GM13976 (cell line): ENCODE measurements at regions of chrX and their contacts with region 1.

Region 1: GRCh38 chrX:109714340-109714958 is 18.6 kb downstream of the ACSL4 start:
- DNase-seq: no peak
- CTCF ChIP-seq: no peak

Region 2: DNA sequence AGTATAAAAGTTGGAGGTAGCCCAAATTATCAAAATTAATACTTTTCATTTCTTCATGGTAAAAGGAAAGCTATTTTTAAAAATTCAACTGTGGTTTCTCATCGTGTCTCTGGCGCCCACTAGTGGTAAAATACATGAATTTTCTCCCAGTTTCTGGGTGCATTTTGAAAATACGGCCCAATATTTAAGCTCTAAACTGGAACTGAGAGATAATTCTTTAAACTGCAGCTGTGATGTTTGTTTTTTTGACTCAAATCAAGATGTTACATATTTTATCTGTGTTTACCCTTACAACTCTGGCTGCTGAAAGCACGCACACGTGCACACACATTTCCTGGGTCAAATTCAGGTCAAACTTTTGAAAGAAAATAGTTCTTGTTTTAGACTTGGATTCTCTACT is 142.5 kb after region 1 on chrX:
- in situ Hi-C with region 1: loop called (anchors 10 kb)
- DNase-seq: no peak
- CTCF ChIP-seq: peak; percentile 41

Region 3: GRCh38 chrX:109886122-109886761 is 171.8 kb after region 1 on chrX:
- in situ Hi-C with region 1: loop called (anchors 10 kb)
- DNase-seq: peak; percentile 46
- CTCF ChIP-seq: peak; percentile 77